Sigmoid colon (tissue), 7 donors: ENCODE measurements at regions of chr10 and their contacts with region 1.

Region 1: GRCh38 chr10:111756217-111757061 is 427.1 kb downstream of the GPAM start:
- DNase-seq: peak; percentile 68
- H3K4me3 ChIP-seq: no peak overlapping the region
- H3K27ac ChIP-seq: no peak overlapping the region
- H3K4me1 ChIP-seq: peaks cover 0 to 12% (median 0%) of the 10 kb centered on the region in 4 donors
- H3K27me3 ChIP-seq: no peaks in the 10 kb centered on the region
- CTCF ChIP-seq: peak; percentile 9 to 55 (median 33)
- EP300 ChIP-seq: no peak
- POLR2A ChIP-seq: no peak

Region 2: DNA sequence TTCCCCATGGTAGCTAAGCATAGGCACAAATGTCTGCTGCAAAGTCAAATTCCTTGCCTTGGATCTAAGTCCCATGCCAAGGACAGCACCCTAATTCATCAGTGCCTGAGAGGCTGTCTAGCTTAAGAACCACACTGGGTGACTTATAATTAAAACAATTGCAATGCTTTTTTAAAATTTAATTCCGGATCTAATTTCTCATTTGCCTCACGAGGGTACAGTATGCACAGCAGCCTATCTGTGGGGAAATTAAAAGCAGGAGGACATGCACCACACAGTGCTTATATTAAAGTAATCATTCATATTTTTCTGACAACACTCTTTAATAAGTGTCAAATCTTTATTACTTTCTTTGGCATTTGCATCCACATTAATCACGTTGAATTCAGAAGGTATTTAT is 48.3 kb after region 1 on chr10:
- intact Hi-C with region 1: no loop called
- DNase-seq: no peak
- H3K4me3 ChIP-seq: no peak overlapping the region
- H3K27ac ChIP-seq: no peak overlapping the region
- H3K4me1 ChIP-seq: no peaks in the 10 kb centered on the region
- H3K27me3 ChIP-seq: no peaks in the 10 kb centered on the region
- CTCF ChIP-seq: no peak
- EP300 ChIP-seq: no peak
- POLR2A ChIP-seq: no peak

Region 3: DNA sequence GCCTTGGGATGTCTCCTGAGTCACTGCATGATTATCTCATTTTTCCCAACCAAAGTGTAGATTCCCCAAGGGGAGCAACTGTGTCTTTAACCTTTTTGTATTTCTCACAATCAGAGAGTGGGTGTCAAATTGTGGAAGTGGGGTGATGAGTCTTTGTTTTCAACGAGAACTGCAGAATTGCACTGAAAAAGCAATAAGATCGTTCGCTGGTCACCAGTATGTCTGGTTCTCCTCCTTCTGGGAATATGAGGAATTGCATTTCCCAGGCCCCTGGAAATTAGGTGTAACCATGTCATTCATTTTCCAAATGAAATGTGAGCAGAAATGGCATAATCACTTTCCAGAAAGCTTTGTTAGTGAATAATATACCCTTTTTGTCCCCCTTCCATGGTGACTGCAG is 100.2 kb after region 1 on chr10:
- intact Hi-C with region 1: loop called (anchors 5 kb)
- DNase-seq: no peak
- H3K4me3 ChIP-seq: no peak overlapping the region
- H3K27ac ChIP-seq: no peak overlapping the region
- H3K4me1 ChIP-seq: no peaks in the 10 kb centered on the region
- H3K27me3 ChIP-seq: no peaks in the 10 kb centered on the region
- CTCF ChIP-seq: peak in 2 of 4 experiments; percentile 6 to 44
- EP300 ChIP-seq: no peak
- POLR2A ChIP-seq: no peak

Region 4: GRCh38 chr10:112140110-112140970 is 383.9 kb after region 1 on chr10:
- intact Hi-C with region 1: loop called (anchors 2 kb)
- DNase-seq: peak; percentile 73
- H3K4me3 ChIP-seq: no peak overlapping the region
- H3K27ac ChIP-seq: no peak overlapping the region
- H3K4me1 ChIP-seq: no peaks in the 10 kb centered on the region
- H3K27me3 ChIP-seq: no peaks in the 10 kb centered on the region
- CTCF ChIP-seq: peak; percentile 29 to 87 (median 71)
- EP300 ChIP-seq: no peak
- POLR2A ChIP-seq: no peak